Activated CD4-positive, alpha-beta T cell treated with anti-CD3 and anti-CD28 coated beads, Interleukin-2, amount 10 ng/mL, durations not matched to agents 24 days and 14 days (primary cell): ENCODE measurements at regions of chr12 and their contacts with region 1.

Region 1: GRCh38 chr12:96399919-96400797 is at the start of gene CDK17:
- DNase-seq: peak; percentile 96
- H3K4me3 Mint-ChIP-seq: peak within 1 kb of the TSS; percentile 92
- H3K27ac Mint-ChIP-seq: peak within 1 kb of the TSS; percentile 97
- H3K4me1 Mint-ChIP-seq: peaks cover 45% of the 10 kb centered on the region
- H3K27me3 Mint-ChIP-seq: no peaks in the 10 kb centered on the region
- total RNA-seq, gene CDK17: 28.0 and 30.5 TPM in 2 replicates

Region 2: DNA sequence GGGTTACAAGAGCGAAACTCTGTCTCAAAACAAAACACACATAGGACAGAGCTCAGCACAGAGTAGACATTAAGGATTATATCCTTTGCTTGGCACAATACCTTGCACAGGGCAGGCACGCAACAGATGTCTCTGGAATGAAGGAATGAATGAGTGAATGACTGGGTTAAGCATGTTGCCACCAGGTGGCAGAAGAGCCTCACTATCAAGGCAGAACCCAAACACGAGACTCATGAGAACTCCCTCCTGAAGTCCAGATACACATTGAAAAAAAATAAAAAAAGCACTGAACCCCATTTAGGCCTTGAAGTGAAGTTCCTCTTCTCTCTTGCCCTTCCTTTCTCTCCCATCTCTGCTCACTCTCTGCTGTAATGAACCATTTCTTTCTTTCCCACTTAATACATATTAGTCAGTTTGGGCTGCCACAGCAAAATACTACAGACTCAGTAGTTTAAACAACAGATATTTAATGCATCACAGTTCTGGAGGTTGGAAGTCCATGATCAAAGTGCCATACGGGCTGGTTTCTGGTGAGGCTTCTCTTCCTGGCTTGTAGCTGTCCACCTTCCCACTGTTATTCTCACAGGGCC is 338.2 kb before region 1 on chr12:
- intact Hi-C with region 1: loop called (anchors 1 kb)
- DNase-seq: peak; percentile 92
- H3K4me3 Mint-ChIP-seq: no peak overlapping the region
- H3K27ac Mint-ChIP-seq: no peak overlapping the region
- H3K4me1 Mint-ChIP-seq: peaks cover 24% of the 10 kb centered on the region
- H3K27me3 Mint-ChIP-seq: no peaks in the 10 kb centered on the region

Region 3: GRCh38 chr12:96237465-96238077 is 162.6 kb before region 1 on chr12:
- intact Hi-C with region 1: loop called (anchors 1 kb)
- DNase-seq: peak; percentile 83
- H3K4me3 Mint-ChIP-seq: peak overlapping the region; percentile 65
- H3K27ac Mint-ChIP-seq: peak overlapping the region; percentile 71
- H3K4me1 Mint-ChIP-seq: peaks cover 65% of the 10 kb centered on the region
- H3K27me3 Mint-ChIP-seq: no peaks in the 10 kb centered on the region

Region 4: GRCh38 chr12:96343347-96343954 is 56.7 kb before region 1 on chr12:
- intact Hi-C with region 1: loop called (anchors 2 kb)
- DNase-seq: peak; percentile 75
- H3K4me3 Mint-ChIP-seq: peak overlapping the region; percentile 42
- H3K27ac Mint-ChIP-seq: peak overlapping the region; percentile 35
- H3K4me1 Mint-ChIP-seq: peaks cover 37% of the 10 kb centered on the region
- H3K27me3 Mint-ChIP-seq: no peaks in the 10 kb centered on the region

Region 5: DNA sequence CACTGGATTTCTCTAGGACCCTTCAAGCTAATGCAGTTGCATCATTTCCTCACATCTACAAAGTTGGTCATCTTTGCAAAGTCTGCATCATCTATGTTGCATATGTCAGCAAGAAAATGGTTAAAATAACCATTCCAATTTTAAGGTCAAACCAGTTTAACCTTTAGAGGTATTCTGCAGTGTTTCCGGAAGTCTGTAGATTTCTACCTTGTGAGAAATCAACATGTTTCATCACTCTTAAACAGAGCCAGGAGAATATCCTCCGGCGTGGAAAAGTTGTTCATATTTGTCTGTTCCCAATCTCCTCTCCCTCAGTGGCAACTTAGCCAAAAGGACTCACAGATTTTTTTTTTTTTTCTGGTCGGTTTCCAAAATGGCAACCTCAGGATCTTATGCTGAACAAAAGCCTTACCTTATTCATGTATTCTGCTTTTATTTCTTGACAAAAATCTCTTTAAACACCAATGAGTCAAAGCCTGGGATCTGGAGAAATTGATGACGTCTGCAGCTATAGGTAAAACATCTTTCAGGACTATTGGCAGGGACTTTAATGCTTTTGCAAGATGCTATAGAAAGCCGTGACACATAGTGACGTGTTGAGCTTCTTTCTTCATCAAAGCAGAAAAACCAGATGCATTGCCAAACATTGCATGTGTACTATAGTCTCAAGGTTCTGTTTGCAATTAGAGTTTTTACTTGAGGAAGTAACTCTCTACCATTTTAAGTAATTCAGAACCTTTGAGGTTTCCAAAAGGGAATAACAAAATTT is 16.1 kb after region 1 on chr12:
- intact Hi-C with region 1: no loop called
- DNase-seq: no peak
- H3K4me3 Mint-ChIP-seq: no peak overlapping the region
- H3K27ac Mint-ChIP-seq: no peak overlapping the region
- H3K4me1 Mint-ChIP-seq: peaks cover 27% of the 10 kb centered on the region
- H3K27me3 Mint-ChIP-seq: peaks cover 2% of the 10 kb centered on the region

Region 6: DNA sequence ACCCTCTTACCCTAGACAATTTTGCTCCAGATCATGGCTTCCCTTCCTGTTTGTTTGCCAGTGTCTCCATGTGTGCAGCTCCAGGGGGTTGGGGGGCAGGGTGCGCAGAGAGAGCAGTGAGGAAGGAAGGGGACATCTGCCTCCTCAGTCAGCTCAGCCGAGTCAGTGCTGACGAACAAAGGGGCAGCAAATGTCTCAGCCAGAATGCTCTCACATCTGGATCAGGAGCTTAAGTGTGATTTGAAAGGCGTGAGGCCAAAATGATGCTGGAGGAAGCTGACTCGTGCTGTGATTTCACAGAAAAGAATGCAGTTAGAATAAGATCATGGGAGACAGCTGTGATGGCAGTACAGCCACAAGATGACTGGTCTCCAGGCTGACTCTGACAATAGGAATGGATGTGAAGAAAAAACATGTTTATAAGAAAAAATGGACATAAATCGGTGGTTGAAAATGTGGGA is 27.1 kb after region 1 on chr12:
- intact Hi-C with region 1: loop called (anchors 1 kb)
- DNase-seq: peak; percentile 68
- H3K4me3 Mint-ChIP-seq: peak overlapping the region; percentile 63
- H3K27ac Mint-ChIP-seq: peak overlapping the region; percentile 80
- H3K4me1 Mint-ChIP-seq: peaks cover 37% of the 10 kb centered on the region
- H3K27me3 Mint-ChIP-seq: no peaks in the 10 kb centered on the region

Region 7: GRCh38 chr12:96501139-96501761 is 101.1 kb after region 1 on chr12:
- intact Hi-C with region 1: loop called (anchors 5 kb)
- DNase-seq: peak; percentile 81
- H3K4me3 Mint-ChIP-seq: peak overlapping the region; percentile 51
- H3K27ac Mint-ChIP-seq: peak overlapping the region; percentile 82
- H3K4me1 Mint-ChIP-seq: peaks cover 40% of the 10 kb centered on the region
- H3K27me3 Mint-ChIP-seq: no peaks in the 10 kb centered on the region

Region 8: GRCh38 chr12:96606644-96607295 is 206.6 kb after region 1 on chr12:
- intact Hi-C with region 1: no loop called
- DNase-seq: no peak
- H3K4me3 Mint-ChIP-seq: no peak overlapping the region
- H3K27ac Mint-ChIP-seq: no peak overlapping the region
- H3K4me1 Mint-ChIP-seq: no peaks in the 10 kb centered on the region
- H3K27me3 Mint-ChIP-seq: peaks cover 14% of the 10 kb centered on the region